HEK293 (cell line): ENCODE measurements at regions of chr9 and their contacts with region 1.

Region 1: GRCh38 chr9:97921959-97922724 is at the start of gene TRMO:
- H3K4me3 ChIP-seq: peak within 1 kb of the TSS; percentile 83
- H3K27ac ChIP-seq: peak within 1 kb of the TSS; percentile 27
- H3K4me1 ChIP-seq: no peaks in the 10 kb centered on the region
- CTCF ChIP-seq: peak; percentile 96

Region 2: GRCh38 chr9:97703437-97704344 is 218.5 kb before region 1 on chr9:
- CTCF ChIA-PET with region 1: interaction called, 14 read pairs
- POLR2A ChIA-PET with region 1: no interaction called
- H3K4me3 ChIP-seq: no peak overlapping the region
- H3K27ac ChIP-seq: peak overlapping the region; percentile 8; the same call in 1 of the 2 replicates
- H3K4me1 ChIP-seq: no peaks in the 10 kb centered on the region; the same call in 1 of the 2 replicates
- CTCF ChIP-seq: no peak

Region 3: DNA sequence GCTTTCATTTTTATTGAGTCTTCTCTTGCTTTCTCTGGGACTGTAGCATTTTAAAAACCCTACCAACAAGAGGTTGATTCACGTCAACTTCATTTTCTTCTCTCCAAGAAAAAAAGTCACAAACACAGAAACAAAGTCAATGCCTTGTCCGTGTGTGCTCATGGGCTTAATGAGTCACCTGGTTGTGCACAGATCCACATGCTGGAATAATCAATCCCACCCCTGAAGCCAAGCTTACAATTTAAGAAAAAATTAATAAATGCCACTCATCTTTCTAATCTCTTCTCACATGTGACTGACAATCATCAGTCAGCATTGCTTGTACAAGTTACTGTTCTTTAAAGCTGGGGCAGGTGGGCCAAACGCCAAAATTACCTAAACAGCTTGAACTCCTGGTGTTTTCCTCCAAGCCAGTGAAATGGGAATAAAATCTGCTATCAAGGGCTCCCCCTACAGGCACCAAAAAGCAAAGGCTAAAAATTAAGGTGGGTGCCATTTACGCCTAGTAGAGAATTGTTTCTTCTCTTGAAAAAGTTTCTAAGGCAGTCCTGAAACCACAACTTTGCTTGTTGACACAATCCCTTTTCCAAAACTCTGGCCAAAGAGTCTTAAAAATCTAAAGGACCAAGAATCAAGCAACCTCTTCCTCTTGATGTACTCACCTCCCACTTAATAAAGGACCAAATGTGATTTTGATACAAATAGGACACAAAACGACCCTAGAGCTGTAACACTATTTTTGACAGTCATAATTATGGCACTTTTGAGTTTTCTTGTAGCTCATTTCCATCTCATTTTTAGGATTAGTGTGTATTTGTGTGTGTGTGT is 21.2 kb before region 1 on chr9:
- CTCF ChIA-PET with region 1: interaction called, 34 read pairs
- POLR2A ChIA-PET with region 1: interaction called, 5 read pairs
- H3K4me3 ChIP-seq: no peak overlapping the region
- H3K27ac ChIP-seq: no peak overlapping the region
- H3K4me1 ChIP-seq: no peaks in the 10 kb centered on the region
- CTCF ChIP-seq: no peak

Region 4: DNA sequence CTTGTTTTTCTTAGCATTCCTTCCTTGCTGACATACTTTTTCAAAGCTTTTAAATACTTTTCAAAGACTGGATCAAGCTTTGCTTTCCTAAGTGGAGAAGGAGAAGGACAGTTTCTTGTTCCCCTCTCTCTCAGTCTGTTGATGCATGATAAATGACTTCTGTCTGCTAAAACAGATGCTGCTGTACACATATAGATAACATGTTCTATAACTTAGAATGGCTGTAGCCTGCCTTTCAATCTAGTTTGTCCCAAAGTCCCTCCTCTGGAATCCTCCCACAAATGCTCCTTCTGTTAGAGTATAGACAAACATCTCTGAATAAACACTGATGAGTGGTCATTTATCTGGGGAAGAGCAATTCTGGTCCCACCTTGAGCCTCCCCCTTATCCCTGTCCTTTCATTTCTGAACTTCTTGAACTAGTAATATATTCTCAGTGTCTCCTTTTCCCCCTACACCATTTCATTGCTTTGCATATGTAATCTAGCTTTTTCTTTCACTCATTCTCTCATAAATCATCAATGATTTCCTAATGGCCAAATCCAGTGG is 21.2 kb after region 1 on chr9:
- CTCF ChIA-PET with region 1: interaction called, 28 read pairs
- POLR2A ChIA-PET with region 1: no interaction called
- H3K4me3 ChIP-seq: no peak overlapping the region
- H3K27ac ChIP-seq: no peak overlapping the region
- H3K4me1 ChIP-seq: no peaks in the 10 kb centered on the region
- CTCF ChIP-seq: no peak

Region 5: DNA sequence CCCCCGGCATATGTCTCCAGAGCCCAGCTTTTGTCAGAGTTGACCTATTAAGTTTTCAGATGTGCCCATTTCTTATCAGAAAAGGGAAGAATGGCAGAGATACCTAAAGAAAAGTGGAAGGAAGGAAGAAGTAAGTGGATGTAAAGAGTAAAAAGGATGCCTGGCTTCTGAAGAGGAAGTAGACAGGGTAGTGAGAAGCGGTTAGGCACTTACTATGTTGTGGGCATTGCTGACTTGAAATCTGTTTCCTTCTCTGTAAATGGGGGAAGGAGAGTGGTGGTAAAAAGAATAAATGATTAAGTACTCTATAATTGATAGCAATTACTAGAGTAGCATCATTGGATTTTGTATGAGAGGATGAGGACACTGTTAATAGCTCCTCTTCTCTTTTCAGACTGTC is 70.9 kb after region 1 on chr9:
- CTCF ChIA-PET with region 1: interaction called, 10 read pairs
- POLR2A ChIA-PET with region 1: no interaction called
- H3K4me3 ChIP-seq: no peak overlapping the region
- H3K27ac ChIP-seq: no peak overlapping the region
- H3K4me1 ChIP-seq: 0 out of 2 replicates have a peak, but pooled peaks cover 3% of the 10 kb centered on the region
- CTCF ChIP-seq: no peak

Region 6: GRCh38 chr9:98034593-98035546 is 112.7 kb after region 1 on chr9:
- CTCF ChIA-PET with region 1: interaction called, 26 read pairs
- POLR2A ChIA-PET with region 1: no interaction called
- H3K4me3 ChIP-seq: no peak overlapping the region
- H3K27ac ChIP-seq: no peak overlapping the region
- H3K4me1 ChIP-seq: no peaks in the 10 kb centered on the region
- CTCF ChIP-seq: peak; percentile 33; the same call in 1 of the 2 replicates

Region 7: GRCh38 chr9:98074115-98074990 is 152.2 kb after region 1 on chr9:
- CTCF ChIA-PET with region 1: interaction called, 16 read pairs
- POLR2A ChIA-PET with region 1: no interaction called
- H3K4me3 ChIP-seq: no peak overlapping the region
- H3K27ac ChIP-seq: no peak overlapping the region
- H3K4me1 ChIP-seq: no peaks in the 10 kb centered on the region
- CTCF ChIP-seq: peak; percentile 63